B cell (primary cell): ENCODE measurements at regions of chr22 and their contacts with region 1.

Region 1: GRCh38 chr22:43273902-43274484 is 69.2 kb downstream of the SCUBE1 start:
- DNase-seq: peak; percentile 55
- ATAC-seq: peak; percentile 17
- H3K4me3 ChIP-seq: no peak overlapping the region
- H3K4me3 Mint-ChIP-seq: no peak overlapping the region
- H3K27ac ChIP-seq: no peak overlapping the region
- H3K27ac Mint-ChIP-seq: no peak overlapping the region
- H3K4me1 ChIP-seq: no peaks in the 10 kb centered on the region
- H3K4me1 Mint-ChIP-seq: no peaks in the 10 kb centered on the region
- H3K27me3 ChIP-seq: no peaks in the 10 kb centered on the region
- H3K27me3 Mint-ChIP-seq: peaks cover 15% of the 10 kb centered on the region
- CTCF ChIP-seq: peak; percentile 30

Region 2: DNA sequence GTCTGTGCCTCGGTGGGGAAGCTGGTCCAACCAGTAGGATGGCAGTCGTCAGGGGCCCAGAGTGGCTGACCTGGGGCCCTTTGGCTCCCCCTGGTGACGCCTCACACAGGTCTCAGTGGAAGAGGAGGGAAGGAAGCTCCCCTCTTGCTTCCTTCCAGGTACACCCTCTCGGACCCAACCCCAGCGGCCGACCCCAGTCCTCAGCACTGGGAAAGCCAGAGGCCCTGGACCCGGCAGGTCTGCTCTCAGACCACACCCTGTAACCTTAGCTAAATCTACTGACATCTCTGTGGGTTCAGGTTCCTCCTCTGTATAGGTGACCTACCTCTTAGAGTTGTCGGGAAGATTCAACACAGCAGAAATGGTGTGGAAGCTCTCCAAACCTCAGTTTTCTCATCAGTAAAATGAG is 72.5 kb after region 1 on chr22:
- CTCF ChIA-PET with region 1: interaction called, 20 read pairs
- POLR2A ChIA-PET with region 1: no interaction called
- intact Hi-C with region 1: no loop called
- DNase-seq: peak; percentile 60
- ATAC-seq: no peak
- H3K4me3 ChIP-seq: no peak overlapping the region
- H3K4me3 Mint-ChIP-seq: no peak overlapping the region
- H3K27ac ChIP-seq: no peak overlapping the region
- H3K27ac Mint-ChIP-seq: no peak overlapping the region
- H3K4me1 ChIP-seq: peaks cover 0 to 9% of the 10 kb centered on the region in 2 donors
- H3K4me1 Mint-ChIP-seq: peaks cover 11% of the 10 kb centered on the region
- H3K27me3 ChIP-seq: peaks cover 0 to 48% (median 12%) of the 10 kb centered on the region in 4 experiments
- H3K27me3 Mint-ChIP-seq: peaks cover 64% of the 10 kb centered on the region
- CTCF ChIP-seq: peak; percentile 71

Region 3: DNA sequence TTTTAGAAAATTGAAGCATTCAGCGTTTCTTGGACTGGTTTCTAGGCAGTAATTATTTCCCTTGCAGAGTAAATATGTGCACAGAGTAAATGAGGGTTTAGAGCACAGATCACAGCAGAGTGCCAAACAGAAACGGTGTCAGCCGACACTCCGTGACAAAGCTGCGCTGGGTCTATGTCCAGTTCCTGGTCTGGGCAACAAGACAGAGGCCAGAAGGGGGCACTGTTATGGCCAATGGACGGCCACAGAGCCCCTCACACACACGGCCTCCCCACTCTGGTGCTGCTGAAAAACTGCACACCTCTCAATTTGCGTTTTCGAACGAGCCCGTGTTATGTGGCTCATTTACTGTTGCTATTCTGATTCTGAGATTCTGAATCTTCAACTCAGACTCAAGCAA is 318.5 kb after region 1 on chr22:
- CTCF ChIA-PET with region 1: no interaction called
- POLR2A ChIA-PET with region 1: no interaction called
- intact Hi-C with region 1: no loop called
- DNase-seq: no peak
- ATAC-seq: no peak
- H3K4me3 ChIP-seq: no peak overlapping the region
- H3K4me3 Mint-ChIP-seq: no peak overlapping the region
- H3K27ac ChIP-seq: no peak overlapping the region
- H3K27ac Mint-ChIP-seq: no peak overlapping the region
- H3K4me1 ChIP-seq: no peaks in the 10 kb centered on the region
- H3K4me1 Mint-ChIP-seq: no peaks in the 10 kb centered on the region
- H3K27me3 ChIP-seq: no peaks in the 10 kb centered on the region
- H3K27me3 Mint-ChIP-seq: peaks cover 33% of the 10 kb centered on the region
- CTCF ChIP-seq: no peak